ENCODE measurements at regions of chr6 and their contacts with region 1.

Region 1: DNA sequence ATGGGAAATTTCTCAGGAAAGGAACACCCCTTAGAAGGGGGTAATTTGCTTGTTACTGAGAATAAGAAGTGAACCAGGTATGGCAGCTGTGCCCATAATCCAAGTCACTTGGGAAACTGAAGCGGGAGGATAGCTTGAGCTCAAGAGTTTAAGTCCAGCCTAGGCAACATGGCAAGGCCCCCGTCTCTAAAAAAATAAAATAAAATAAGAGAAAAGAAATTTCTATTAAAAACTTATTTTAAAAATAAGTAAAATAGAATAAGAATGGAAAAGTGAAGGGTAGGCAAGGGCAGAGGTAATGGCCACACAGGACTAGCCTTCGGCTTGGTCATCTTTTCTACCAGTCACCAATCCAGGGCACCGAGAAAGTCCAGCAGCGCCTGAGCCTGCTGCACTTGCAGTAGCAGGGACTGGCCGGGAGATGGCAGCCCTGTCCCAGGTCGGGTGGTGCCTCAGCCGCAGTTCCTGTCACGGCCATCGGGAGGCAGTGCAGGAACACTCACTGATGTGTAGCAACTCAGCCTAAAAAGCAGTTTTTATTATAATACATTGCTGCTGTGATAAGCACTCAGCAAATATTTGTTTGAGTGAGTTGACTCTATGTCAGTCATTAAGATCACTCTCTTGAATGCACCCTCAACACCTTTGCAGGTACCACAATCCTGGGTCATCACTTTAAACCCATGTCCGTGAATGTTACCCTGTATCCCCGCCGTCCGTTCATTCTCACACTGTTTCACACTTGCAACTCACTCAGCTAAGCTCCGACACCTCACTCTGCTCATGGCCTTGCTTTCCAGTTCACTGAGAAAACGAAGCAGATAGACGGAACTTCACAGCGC is 23.2 kb upstream of the GCM1 start:
- DNase-seq: peak; percentile 76 to 87 (median 80)
- H3K4me3 ChIP-seq: no peak overlapping the region
- H3K27ac ChIP-seq: no peak overlapping the region
- H3K4me1 ChIP-seq: no peaks in the 10 kb centered on the region
- H3K27me3 ChIP-seq: no peaks in the 10 kb centered on the region

Region 2: DNA sequence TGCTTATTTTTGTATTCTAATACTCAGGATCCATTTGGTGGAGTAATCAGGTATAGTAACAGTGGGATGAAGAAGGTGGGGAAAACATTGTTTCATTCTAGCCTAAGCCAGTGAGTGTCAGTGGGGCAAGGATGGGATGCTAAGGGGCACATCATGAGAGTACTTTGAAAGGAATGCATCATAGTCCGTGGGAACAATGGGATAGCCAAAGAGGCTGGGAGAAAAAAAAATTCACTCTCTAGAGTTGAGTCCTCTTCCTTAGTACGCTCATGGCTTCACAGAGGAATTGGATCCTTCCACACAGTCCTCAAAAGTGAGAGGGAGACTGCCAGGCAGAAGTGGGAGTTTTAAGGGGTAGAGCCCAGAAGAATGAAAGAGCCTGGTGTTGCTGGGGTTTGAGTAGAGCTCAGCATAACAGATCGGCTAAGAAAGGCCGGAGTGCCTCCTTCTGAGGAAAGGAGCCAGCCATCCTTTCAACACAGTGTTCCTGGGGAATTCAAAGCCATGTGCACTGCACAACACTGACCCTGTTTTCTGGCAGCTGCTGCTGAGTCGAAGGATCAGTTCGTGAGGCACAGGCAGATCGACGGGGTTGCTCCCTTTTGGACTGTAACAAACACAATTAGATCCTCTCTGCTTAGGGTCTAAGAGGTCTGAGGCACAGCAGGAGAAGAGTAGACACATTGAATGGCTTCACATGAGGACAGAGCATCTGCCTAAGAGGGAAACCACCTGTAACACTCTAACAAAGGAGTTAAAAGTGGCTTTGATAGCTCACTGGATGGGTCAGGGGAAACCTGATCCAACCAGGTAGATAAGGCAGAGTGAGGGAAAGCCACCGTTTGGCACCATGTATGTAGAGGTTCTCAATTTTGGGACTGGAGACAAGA is 115.8 kb after region 1 on chr6:
- CTCF ChIA-PET with region 1: interaction called, 24 read pairs
- POLR2A ChIA-PET with region 1: no interaction called
- DNase-seq: no peak
- H3K4me3 ChIP-seq: no peak overlapping the region
- H3K27ac ChIP-seq: no peak overlapping the region
- H3K4me1 ChIP-seq: peaks cover 5 to 11% (median 6%) of the 10 kb centered on the region in 4 experiments
- H3K27me3 ChIP-seq: no peaks in the 10 kb centered on the region

Region 3: GRCh38 chr6:53294095-53294494 is 122.3 kb after region 1 on chr6:
- CTCF ChIA-PET with region 1: interaction called, 24 read pairs
- POLR2A ChIA-PET with region 1: no interaction called
- DNase-seq: peak; percentile 46 to 71 (median 70)
- H3K4me3 ChIP-seq: no peak overlapping the region
- H3K27ac ChIP-seq: no peak overlapping the region
- H3K4me1 ChIP-seq: peaks cover 7 to 25% (median 13%) of the 10 kb centered on the region in 4 experiments
- H3K27me3 ChIP-seq: no peaks in the 10 kb centered on the region

Region 4: DNA sequence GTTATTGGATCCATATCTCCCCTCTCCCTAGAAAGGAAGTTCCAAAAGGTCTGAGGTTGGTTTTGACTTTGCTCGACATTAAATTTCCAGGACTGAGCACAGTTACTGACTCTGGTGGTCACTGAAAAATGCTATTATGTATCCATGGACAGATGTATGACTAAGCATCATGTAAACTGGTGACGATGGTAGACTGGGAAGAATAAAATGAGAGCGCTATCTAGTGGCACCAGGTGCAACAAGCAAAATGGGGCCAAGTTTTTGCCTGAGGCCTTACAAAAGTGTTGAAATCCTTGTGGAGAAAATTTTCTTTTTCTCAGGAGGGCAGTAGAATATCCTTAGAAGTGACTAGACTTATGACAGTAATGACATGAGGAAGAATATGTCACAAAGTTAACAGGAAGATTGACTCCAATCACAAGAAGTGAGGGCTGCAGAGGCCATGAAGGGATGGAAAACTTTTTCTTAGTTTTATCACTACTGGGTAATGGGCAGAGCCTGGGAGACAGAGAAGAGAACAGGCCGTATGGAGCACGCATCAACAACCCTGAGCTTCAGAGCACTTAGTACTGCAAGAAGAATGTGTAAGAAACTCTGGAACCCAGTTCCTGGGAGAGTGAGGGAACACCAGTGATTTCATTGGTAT is 265.9 kb after region 1 on chr6:
- CTCF ChIA-PET with region 1: interaction called, 15 read pairs
- POLR2A ChIA-PET with region 1: no interaction called
- DNase-seq: peak; percentile 54 to 71 (median 65)
- H3K4me3 ChIP-seq: no peak overlapping the region
- H3K27ac ChIP-seq: no peak overlapping the region
- H3K4me1 ChIP-seq: peaks cover 0 to 24% (median 8%) of the 10 kb centered on the region in 4 experiments
- H3K27me3 ChIP-seq: no peaks in the 10 kb centered on the region

Measured in common myeloid progenitor, CD34-positive (primary cell).